Uterus (tissue), 4 donors: ENCODE measurements at regions of chr11 and their contacts with region 1.

Region 1: GRCh38 chr11:63478896-63479295 is 12.1 kb downstream of the PLAAT5 start:
- DNase-seq: peak; percentile 26 to 61
- H3K4me3 ChIP-seq: no peak overlapping the region
- H3K27ac ChIP-seq: no peak overlapping the region
- H3K4me1 ChIP-seq: no peaks in the 10 kb centered on the region
- H3K27me3 ChIP-seq: no peaks in the 10 kb centered on the region
- CTCF ChIP-seq: peak; percentile 86 to 94 (median 92)
- POLR2A ChIP-seq: no peak

Region 2: GRCh38 chr11:63629426-63629825 is 150.5 kb after region 1 on chr11:
- intact Hi-C with region 1: loop called (anchors 5 kb)
- DNase-seq: no peak
- H3K4me3 ChIP-seq: no peak overlapping the region
- H3K27ac ChIP-seq: no peak overlapping the region
- H3K4me1 ChIP-seq: no peaks in the 10 kb centered on the region
- H3K27me3 ChIP-seq: no peaks in the 10 kb centered on the region
- CTCF ChIP-seq: no peak
- POLR2A ChIP-seq: no peak

Region 3: DNA sequence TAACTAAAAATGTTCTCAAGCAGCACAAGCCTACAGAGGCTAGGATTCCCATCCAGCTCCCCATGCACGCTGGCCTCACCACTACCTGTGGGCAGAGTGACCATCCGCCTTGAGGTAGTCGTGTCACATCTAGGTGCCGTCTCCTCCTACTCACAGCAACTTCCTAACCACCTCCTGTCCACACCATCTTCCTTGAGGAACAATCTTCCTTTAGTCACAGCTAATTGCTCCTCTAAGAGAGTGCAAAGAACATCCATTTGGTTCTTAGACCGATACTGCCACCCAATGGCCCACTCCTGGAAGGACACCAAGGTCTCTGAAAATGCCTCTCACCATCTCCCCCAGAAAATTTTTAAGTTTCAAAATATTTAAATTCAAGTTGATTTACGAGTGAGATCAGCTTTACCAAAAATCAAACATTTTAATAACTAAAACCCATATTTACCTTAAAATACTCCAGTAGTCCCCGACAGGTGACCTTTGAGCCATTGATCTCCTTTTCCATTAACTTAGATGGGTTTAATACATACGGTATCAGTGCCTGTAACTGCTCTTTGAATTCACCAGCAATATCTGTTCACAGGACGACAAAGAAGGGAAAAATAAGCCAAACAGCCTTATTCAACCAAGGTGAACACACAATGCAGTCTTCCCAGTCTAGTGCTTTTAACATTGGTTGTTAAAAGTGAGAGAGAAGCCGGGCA is 157.0 kb after region 1 on chr11:
- intact Hi-C with region 1: loop called (anchors 5 kb)
- DNase-seq: peak; percentile 45 to 51
- H3K4me3 ChIP-seq: no peak overlapping the region
- H3K27ac ChIP-seq: no peak overlapping the region
- H3K4me1 ChIP-seq: no peaks in the 10 kb centered on the region
- H3K27me3 ChIP-seq: no peaks in the 10 kb centered on the region
- CTCF ChIP-seq: peak; percentile 62 to 80 (median 76)
- POLR2A ChIP-seq: no peak

Region 4: DNA sequence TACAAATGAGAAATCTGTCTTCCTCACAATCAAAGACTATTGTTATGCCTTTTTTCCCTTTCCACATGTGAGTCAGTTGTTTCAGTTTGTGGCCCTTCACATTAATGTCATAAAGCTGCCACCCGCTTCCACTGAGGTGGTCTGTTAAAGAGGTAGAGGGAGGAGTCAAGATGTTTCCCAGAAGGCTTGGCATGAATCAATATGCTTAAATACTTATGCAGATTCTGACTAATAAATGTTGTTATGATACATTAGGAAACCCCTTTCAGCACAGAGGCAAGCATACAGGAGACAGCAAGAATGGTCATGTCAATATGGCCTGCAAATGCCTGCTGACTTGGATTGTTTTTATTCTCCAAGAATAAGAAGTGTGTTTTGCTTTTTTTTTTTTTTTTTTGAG is 208.9 kb after region 1 on chr11:
- intact Hi-C with region 1: no loop called
- DNase-seq: no peak
- H3K4me3 ChIP-seq: no peak overlapping the region
- H3K27ac ChIP-seq: no peak overlapping the region
- H3K4me1 ChIP-seq: peaks cover 0 to 22% of the 10 kb centered on the region in 2 donors
- H3K27me3 ChIP-seq: no peaks in the 10 kb centered on the region
- CTCF ChIP-seq: no peak
- POLR2A ChIP-seq: no peak